ENCODE measurements at regions of chr1 and their contacts with region 1.

Region 1: DNA sequence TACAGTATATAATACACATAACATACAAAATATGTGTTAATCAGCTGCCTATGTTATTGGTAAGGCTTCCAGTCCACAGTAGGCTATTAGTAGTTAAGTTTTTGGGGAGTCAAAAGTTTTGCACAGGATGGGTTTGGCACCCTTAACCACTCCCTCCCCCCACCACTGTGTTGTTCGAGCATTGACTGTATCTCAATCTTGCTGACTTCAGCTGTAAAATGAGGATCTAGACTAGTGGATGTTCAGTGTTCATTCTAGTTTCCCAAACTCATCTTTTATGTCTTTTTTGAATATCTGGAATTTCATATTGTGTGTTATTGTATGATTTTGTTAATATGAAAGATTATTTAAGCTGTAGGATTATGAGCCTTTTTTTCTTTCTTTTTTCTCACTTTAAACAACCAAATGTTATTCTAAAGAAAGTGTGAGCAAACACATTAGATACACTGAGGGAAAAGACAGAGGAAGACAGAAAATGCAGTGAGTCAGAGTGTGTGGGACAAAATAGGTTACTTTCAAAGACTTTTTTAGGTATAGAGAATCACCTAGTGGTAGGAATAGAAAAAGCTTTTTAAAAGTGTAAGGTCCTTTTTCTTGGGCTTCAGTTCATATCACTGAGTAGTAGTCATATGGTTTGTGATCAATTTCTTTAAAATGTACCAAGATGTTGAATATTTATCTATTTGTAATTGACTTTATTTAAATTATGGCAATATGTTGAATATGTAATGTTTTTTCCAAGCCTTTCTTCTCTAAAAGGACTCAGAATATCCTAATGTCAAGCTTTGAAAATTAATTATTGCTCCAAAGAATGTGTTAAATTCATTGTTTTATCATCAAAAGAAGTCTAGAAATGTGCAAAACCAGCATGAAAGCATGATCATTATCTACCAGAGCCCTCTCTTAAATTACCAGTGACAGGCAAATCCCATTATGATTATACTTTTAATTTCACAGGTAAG is 17.9 kb upstream of the CENPF start:
- DNase-seq: no peak
- H3K4me3 ChIP-seq: no peak overlapping the region
- H3K27ac ChIP-seq: peak overlapping the region in 1 of 2 experiments; percentile 50; a peak in 2 of 4 replicates
- H3K4me1 ChIP-seq: peaks cover 3 to 38% of the 10 kb centered on the region in 2 experiments
- H3K27me3 ChIP-seq: no peaks in the 10 kb centered on the region
- CTCF ChIP-seq: peak; percentile 92
- EP300 ChIP-seq: no peak
- RAD21 ChIP-seq: peak; percentile 87

Region 2: DNA sequence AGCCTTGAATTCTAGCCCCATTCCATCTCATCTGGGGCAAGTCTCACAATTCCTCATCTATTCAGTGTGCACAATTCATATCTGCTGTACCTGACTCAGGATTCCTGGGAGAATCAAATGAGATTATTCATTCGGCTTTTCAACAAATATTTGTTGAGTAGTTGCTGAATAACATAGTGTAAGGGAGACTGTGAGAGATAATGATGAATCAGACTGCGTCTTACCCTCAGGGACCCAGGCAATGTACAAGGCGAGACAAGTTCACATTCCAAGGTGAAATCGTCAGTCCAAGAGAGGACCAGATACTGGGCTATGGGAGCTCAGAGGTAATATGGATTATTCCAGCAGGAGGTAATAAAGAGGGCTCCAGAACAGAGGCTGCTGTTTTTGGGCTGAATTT is 371.9 kb before region 1 on chr1:
- CTCF ChIA-PET with region 1: interaction called, 10 read pairs
- POLR2A ChIA-PET with region 1: no interaction called
- DNase-seq: no peak
- H3K4me3 ChIP-seq: no peak overlapping the region
- H3K27ac ChIP-seq: no peak overlapping the region
- H3K4me1 ChIP-seq: peaks cover 0 to 3% of the 10 kb centered on the region in 2 experiments; a peak in 1 of 4 replicates
- H3K27me3 ChIP-seq: peaks cover 8% of the 10 kb centered on the region; the same call in 1 of the 2 replicates
- CTCF ChIP-seq: no peak
- EP300 ChIP-seq: no peak
- RAD21 ChIP-seq: no peak

Region 3: GRCh38 chr1:214337511-214337910 is 247.6 kb before region 1 on chr1:
- CTCF ChIA-PET with region 1: interaction called, 323 read pairs
- POLR2A ChIA-PET with region 1: interaction called, 5 read pairs
- DNase-seq: no peak
- H3K4me3 ChIP-seq: no peak overlapping the region
- H3K27ac ChIP-seq: peak overlapping the region in 1 of 2 experiments; percentile 48; a peak in 1 of 4 replicates
- H3K4me1 ChIP-seq: no peaks in the 10 kb centered on the region; a peak in 1 of 4 replicates
- H3K27me3 ChIP-seq: no peaks in the 10 kb centered on the region
- CTCF ChIP-seq: no peak
- EP300 ChIP-seq: no peak
- RAD21 ChIP-seq: no peak

Region 4: DNA sequence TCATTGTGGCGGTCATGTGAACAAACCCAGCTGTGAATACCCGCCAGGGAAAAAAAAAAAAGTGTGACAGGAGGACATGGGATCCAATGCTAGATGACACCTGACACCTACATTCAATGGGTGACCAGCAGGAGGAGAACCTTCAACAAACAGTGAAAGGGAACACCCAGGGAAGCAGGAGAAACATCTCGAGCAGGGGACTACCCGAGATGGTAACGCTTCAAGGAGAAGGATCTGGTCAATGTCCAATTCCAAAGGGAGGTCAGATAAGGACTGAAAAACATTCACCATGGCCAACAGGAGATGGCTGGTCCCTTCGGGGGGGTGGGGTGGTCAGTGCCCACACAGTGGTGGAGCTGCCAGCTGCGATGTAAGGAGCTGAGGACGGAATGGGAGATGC is 80.0 kb before region 1 on chr1:
- CTCF ChIA-PET with region 1: no interaction called
- POLR2A ChIA-PET with region 1: no interaction called
- DNase-seq: no peak
- H3K4me3 ChIP-seq: no peak overlapping the region
- H3K27ac ChIP-seq: no peak overlapping the region
- H3K4me1 ChIP-seq: peaks cover 6 to 40% of the 10 kb centered on the region in 2 experiments; a peak in 3 of 4 replicates
- H3K27me3 ChIP-seq: no peaks in the 10 kb centered on the region
- CTCF ChIP-seq: peak; percentile 10; the same call in 1 of the 2 replicates
- EP300 ChIP-seq: no peak
- RAD21 ChIP-seq: no peak

Region 5: GRCh38 chr1:214538496-214538895 is 46.6 kb before region 1 on chr1:
- CTCF ChIA-PET with region 1: interaction called, 10 read pairs
- POLR2A ChIA-PET with region 1: no interaction called
- DNase-seq: no peak
- H3K4me3 ChIP-seq: no peak overlapping the region
- H3K27ac ChIP-seq: peak overlapping the region in 1 of 2 experiments; percentile 11; a peak in 2 of 4 replicates
- H3K4me1 ChIP-seq: peaks cover 2 to 45% of the 10 kb centered on the region in 2 experiments; a peak in 3 of 4 replicates
- H3K27me3 ChIP-seq: no peaks in the 10 kb centered on the region
- CTCF ChIP-seq: no peak
- EP300 ChIP-seq: no peak
- RAD21 ChIP-seq: no peak

Region 6: DNA sequence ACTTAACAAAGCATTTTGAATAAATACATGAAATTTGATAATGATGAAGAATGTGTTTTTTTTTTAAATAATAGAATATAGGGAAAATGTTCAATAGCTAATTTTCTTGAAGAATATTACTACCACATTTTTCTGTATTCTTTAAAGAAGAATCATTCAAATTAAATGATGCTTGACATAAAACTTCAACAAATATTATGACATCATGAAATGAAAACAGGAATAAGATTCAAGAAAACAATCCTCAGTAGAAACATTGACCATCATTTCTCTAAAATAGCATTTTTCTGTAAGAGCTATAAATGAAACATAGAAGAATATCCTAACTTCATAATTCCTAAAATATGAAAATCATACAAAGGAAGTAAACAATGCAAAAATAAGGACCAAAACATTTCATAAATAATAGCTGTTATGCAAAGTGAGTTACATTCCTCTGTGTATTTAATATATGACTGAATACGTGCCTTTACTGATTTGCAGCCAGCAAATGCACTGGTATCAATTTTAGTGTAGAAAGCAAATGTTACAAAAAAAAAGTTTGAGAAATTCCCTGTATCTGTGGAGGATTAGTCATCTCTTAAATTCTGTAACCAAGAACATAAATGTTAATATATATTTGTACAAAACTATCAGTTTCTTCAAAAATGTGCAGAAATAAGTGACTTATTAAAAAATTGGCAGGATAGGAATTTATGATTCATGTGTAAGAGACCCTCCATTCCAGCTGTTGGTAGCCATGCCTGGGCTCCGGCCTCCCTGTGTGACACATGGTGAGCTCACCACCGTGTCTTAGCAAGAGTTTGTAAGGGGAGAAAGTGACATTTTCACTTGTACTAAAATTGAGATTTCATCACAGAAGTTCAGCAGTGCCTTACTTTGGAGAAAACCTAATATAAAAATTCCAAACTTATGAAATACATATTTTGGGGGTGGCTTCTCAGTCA is 18.7 kb before region 1 on chr1:
- CTCF ChIA-PET with region 1: interaction called, 18 read pairs
- POLR2A ChIA-PET with region 1: no interaction called
- DNase-seq: no peak
- H3K4me3 ChIP-seq: no peak overlapping the region
- H3K27ac ChIP-seq: peak overlapping the region in 1 of 2 experiments; percentile 75; a peak in 2 of 4 replicates
- H3K4me1 ChIP-seq: peaks cover 2 to 34% of the 10 kb centered on the region in 2 experiments
- H3K27me3 ChIP-seq: no peaks in the 10 kb centered on the region
- CTCF ChIP-seq: no peak
- EP300 ChIP-seq: peak in 1 of 2 experiments; percentile 74; a peak in 2 of 4 replicates
- RAD21 ChIP-seq: no peak